Adrenal gland (tissue), 19 donors: ENCODE measurements at regions of chr7 and their contacts with region 1.

Region 1: GRCh38 chr7:19754521-19755116 is 18.8 kb downstream of the TMEM196 start:
- DNase-seq: no peak
- H3K4me3 ChIP-seq: no peak overlapping the region
- H3K27ac ChIP-seq: no peak overlapping the region
- H3K4me1 ChIP-seq: no peaks in the 10 kb centered on the region
- H3K27me3 ChIP-seq: no peaks in the 10 kb centered on the region
- CTCF ChIP-seq: peak; percentile 42 to 74 (median 60)
- POLR2A ChIP-seq: no peak

Region 2: DNA sequence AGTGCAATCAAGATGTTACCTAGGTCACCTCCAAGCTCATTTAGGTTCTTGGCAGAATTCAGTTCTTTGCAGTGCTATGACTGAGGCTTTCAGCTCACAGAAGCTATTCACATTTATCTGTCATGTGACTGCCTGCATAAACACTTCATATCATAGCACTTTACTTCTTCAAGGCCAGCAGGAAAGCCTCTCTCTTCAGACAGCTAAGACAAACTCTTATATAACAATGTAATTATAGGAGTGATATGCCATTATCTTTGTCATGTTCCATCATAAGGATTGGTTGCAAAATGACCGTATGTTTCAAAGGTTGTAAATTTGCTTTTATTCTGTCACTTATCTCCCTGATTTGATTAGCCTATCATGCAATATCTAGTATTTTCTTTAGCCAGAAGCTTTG is 97.6 kb after region 1 on chr7:
- intact Hi-C with region 1: no loop called
- DNase-seq: no peak
- H3K4me3 ChIP-seq: no peak overlapping the region
- H3K27ac ChIP-seq: no peak overlapping the region
- H3K4me1 ChIP-seq: no peaks in the 10 kb centered on the region
- H3K27me3 ChIP-seq: no peaks in the 10 kb centered on the region
- CTCF ChIP-seq: no peak
- POLR2A ChIP-seq: no peak

Region 3: DNA sequence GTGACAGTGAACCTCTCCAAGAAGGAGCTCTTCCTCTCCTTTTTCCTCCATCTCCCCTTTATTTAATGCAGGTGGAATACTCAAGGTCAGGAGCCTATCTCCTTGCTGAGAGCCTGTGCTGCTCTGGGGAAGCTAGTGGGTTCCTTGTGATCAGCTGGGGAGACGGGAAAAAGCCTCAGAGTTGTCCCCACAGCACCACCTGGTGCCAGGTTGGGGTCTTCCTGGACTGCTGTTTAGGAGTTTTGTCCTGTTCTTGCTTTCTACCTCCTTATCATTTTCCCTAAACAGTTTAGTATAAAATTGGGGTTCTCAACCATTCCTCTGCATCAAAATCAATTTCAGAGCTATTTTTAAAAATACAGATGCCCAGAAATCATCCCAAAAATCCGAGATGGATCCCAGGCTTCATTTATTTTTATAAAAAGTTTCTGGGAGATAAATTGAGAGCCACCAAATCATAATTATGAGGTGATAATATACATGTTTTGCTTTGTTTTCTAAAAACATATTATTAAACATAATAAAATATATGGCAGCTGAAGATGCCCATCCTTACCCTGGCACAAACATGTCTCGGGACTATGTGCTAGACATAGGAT is 418.2 kb after region 1 on chr7:
- intact Hi-C with region 1: loop called in 1 of 2 experiments (anchors 10 kb)
- DNase-seq: peak; percentile 58 to 89 (median 71)
- H3K4me3 ChIP-seq: no peak overlapping the region
- H3K27ac ChIP-seq: no peak overlapping the region
- H3K4me1 ChIP-seq: no peaks in the 10 kb centered on the region
- H3K27me3 ChIP-seq: no peaks in the 10 kb centered on the region
- CTCF ChIP-seq: peak; percentile 37 to 74 (median 58)
- POLR2A ChIP-seq: no peak